GM10248 (cell line): ENCODE measurements at regions of chr22 and their contacts with region 1.

Region 1: GRCh38 chr22:37608477-37609239 is at the start of gene GGA1:
- DNase-seq: peak; percentile 97
- CTCF ChIP-seq: no peak

Region 2: DNA sequence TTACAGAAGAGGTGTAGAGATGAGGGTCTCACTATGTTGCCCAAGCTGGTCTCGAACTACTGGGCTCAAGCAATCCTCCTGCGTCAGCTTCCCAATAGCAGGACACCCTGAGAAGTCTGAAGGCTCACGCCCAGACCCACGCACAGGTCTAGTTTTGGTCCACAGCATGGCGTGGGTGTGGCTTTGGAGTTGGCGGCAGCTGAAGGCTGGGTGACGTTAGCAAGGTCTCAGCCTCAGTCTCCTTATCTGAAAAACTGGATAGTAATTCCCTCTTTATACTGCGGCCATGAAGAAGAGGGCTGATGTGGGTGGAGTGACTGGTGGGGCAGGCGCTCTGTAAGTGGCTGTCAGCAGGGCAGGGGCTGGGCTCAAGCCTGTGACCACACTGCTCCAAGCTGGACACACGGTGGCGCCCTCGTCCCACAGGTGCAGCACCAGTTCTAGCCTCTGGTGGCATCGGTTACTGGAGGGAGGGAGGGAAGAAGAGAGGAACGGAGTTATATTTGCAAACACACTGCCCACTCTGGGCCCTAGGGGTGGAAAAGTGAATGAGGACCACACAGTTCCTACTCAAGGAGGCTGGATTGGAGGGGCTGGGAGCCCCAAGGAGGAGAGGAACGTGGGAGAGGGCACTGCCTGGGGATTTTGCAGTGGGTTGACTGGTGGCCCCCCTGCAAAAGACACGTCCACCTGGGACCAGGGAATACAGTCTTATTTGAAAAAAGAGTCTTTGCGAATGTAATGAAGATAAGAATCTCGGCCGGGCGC is 69.9 kb before region 1 on chr22:
- CTCF ChIA-PET with region 1: interaction called, 29 read pairs
- POLR2A ChIA-PET with region 1: no interaction called
- DNase-seq: peak; percentile 94
- CTCF ChIP-seq: peak; percentile 98

Region 3: GRCh38 chr22:37581504-37581903 is 27.2 kb before region 1 on chr22:
- CTCF ChIA-PET with region 1: interaction called, 167 read pairs
- POLR2A ChIA-PET with region 1: interaction called, 4 read pairs
- DNase-seq: no peak
- CTCF ChIP-seq: no peak

Region 4: DNA sequence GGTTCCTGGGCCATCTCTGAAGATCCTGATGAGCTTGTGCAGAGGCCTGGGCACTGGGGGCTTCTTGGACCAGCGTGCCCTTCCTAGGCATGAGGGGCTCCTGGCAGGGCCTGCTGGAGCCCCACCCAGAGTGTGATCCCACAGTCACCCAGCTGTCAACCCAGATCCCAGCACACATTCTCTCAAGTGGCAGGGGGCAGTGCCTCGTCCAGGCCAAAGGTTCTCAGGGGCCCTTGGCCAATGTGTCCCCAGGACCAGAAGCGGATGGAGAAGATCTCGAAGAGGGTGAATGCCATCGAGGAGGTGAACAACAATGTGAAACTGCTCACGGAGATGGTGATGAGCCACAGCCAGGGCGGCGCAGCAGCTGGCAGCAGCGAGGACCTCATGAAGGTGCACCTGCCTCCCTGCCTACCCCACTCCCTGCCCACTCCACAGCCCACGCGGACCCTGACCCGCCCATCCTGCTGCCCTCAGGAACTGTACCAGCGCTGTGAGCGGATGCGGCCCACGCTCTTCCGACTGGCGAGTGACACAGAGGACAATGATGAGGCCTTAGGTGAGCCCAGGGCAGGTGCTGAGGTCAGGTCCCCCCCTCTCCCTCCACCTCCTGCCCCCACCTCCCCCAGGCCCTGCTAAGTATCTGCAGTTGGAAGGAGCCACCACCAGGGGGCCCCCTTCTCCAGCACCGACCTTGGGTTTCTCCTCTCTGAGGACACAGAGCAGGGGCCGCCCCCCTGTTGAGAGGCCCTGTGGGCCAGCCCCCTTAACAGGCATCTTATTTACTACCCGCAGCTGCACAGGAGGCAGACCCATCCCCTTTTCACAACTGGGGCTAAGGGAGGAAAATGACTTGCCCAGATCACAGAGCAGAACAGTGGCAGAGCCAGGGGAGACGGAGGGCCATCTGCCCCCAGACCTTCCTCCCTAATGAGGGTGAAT is 14.7 kb after region 1 on chr22:
- CTCF ChIA-PET with region 1: interaction called, 190 read pairs
- POLR2A ChIA-PET with region 1: interaction called, 4 read pairs
- DNase-seq: peak; percentile 86
- CTCF ChIP-seq: peak; percentile 82

Region 5: GRCh38 chr22:37643225-37643847 is 34.7 kb after region 1 on chr22:
- CTCF ChIA-PET with region 1: interaction called, 190 read pairs
- POLR2A ChIA-PET with region 1: no interaction called
- DNase-seq: peak; percentile 86
- CTCF ChIP-seq: peak; percentile 90

Region 6: DNA sequence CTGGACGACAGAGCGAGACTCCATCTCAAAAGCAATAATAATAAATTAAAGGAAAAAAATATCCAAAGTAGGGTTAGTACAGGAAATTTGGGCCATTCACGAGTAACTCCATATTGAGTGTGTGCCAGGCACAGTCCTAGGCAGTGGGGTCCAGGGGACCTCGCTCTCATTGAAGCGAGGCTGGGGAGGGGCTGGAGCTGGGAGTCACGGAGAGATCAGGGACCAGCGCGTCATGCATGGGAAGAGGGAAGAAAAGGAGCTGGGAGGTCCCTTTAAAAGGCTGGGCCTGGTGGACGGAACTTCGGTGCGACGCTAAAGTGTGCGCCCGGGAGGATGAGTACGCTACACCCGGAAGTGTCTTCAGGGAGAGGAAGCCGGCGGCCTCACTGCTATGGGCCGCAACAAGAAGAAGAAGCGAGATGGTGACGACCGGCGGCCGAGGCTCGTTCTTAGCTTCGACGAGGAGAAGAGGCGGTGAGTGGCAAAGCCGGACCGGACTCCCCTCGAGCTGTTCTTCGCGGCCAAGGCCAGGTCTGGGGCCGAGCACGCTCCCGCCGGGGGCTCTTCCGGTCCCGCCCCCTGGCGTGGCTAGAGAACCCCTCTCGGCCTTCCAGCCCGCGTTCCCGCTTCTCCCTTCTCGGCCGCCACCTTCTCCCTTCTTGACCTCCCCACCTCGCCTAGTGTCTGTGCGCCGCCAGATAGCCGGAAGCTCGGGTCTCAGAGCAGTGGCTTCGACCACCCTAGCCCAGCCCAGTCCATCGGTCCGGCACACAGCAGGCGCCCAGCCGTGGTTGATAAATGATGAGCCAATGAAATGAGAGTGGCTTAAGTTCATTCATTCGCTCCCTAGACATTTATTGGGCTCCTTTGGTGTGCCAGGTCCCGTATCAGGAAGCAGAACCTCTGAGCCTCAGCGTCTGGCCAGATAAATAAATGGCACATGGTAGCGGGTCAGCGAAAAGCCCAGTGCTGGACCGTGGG is 77.6 kb after region 1 on chr22 and contains the start of gene NOL12:
- CTCF ChIA-PET with region 1: interaction called, 62 read pairs
- POLR2A ChIA-PET with region 1: interaction called, 3 read pairs
- DNase-seq: peak; percentile 89
- CTCF ChIP-seq: no peak